Heart left ventricle (tissue), 16 donors: ENCODE measurements at regions of chr16 and their contacts with region 1.

Region 1: DNA sequence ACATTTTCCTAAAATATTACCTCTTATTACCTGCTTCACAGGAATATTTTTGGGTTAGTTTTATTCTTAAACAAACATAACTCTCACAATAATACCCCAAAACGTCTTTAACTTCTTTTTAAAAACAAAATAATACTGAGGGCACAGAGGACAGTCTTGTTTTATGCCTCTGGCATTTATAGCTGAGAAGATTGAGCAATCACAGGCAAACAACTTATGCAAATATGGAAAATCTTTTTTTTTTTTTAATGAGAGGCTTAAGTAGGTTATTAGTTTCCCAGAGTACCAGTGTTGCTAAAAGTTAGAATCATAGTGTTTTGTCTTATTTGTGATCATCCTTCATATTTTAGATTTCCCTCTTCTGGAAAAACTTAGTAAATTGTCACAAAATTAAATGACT is 195.0 kb downstream of the FTO start:
- DNase-seq: no peak
- ATAC-seq: no peak
- H3K4me3 ChIP-seq: no peak overlapping the region
- H3K27ac ChIP-seq: no peak overlapping the region
- H3K4me1 ChIP-seq: peaks cover 0 to 46% (median 12%) of the 10 kb centered on the region in 12 donors
- H3K27me3 ChIP-seq: no peaks in the 10 kb centered on the region
- CTCF ChIP-seq: no peak
- POLR2A ChIP-seq: no peak

Region 2: GRCh38 chr16:54266363-54266955 is 367.5 kb after region 1 on chr16:
- intact Hi-C with region 1: loop called in 1 of 10 experiments (anchors 5 kb)
- DNase-seq: no peak
- ATAC-seq: peak in 3 of 4 donors; percentile 32 to 50 (median 47)
- H3K4me3 ChIP-seq: no peak overlapping the region
- H3K27ac ChIP-seq: peak overlapping the region in 11 of 12 donors; percentile 33 to 86 (median 71)
- H3K4me1 ChIP-seq: peaks cover 0 to 25% (median 12%) of the 10 kb centered on the region in 12 donors
- H3K27me3 ChIP-seq: no peaks in the 10 kb centered on the region
- CTCF ChIP-seq: no peak
- POLR2A ChIP-seq: no peak